ENCODE measurements at regions of chrX and their contacts with region 1.

Region 1: DNA sequence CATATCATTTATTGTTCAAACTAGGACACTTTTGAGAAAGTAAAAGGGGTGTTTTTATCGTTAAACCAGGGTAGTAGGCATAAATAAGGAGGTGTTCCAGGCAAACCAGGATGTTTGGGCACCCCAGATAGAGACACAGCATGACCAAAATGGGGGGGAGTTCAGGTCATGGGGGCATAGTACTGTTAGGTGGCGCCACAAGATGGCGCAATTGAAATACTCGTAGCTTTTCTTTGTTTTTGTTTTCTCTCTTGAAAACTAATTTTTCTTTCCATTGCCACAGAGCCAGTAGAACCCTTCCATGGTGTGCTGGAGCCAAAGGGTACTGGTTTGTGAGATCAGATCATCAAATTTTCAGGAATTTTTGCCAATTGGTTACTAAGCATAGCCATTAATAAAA is 283.4 kb downstream of the BCOR start:
- DNase-seq: peak; percentile 51
- H3K4me3 Mint-ChIP-seq: no peak overlapping the region
- H3K27ac Mint-ChIP-seq: peak overlapping the region; percentile 4
- H3K4me1 Mint-ChIP-seq: peaks cover 15% of the 10 kb centered on the region
- H3K27me3 Mint-ChIP-seq: peaks cover 58% of the 10 kb centered on the region
- CTCF ChIP-seq: peak; percentile 45

Region 2: DNA sequence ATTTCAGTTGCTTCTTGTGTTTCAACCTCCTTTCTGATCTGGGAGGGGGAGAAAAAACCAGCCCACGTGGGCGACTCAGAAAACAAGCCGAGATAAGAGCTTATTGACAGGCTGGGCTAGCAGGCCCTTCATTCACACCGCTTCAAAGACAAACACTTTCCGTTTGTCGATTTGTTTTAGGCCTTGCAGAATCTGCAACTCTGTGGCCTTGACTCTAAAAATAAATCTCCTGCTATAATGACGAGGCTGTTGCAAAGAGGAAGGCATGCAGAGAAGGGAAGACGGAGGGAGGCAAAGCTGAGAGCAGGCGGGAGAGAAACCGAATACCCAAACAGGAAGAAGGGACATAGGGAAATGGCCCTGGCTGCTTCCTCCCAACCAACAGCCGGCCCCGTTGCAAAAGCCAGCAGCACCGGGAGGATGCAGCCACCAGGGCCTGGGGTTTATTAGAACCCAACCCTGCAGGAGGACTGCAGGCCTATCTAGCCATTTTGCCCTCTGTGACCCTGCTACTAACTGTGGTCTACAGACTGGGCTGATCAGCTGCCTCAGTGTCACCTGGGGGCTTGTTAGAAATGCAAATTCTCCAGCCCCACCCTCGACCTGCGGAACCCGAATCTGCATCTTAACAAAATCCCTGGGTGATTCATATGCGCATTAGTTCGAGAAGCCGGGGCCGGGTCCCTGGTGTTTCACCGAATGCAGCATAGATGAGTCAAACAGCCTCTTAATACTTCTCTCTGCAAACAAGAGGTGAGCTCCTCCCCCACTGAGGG is 42.1 kb before region 1 on chrX:
- CTCF ChIA-PET with region 1: no interaction called
- POLR2A ChIA-PET with region 1: no interaction called
- intact Hi-C with region 1: no loop called
- DNase-seq: no peak
- H3K4me3 Mint-ChIP-seq: no peak overlapping the region
- H3K27ac Mint-ChIP-seq: no peak overlapping the region
- H3K4me1 Mint-ChIP-seq: no peaks in the 10 kb centered on the region
- H3K27me3 Mint-ChIP-seq: peaks cover 44% of the 10 kb centered on the region
- CTCF ChIP-seq: no peak

Region 3: GRCh38 chrX:39907964-39908616 is 93.7 kb after region 1 on chrX:
- CTCF ChIA-PET with region 1: interaction called, 3 read pairs
- POLR2A ChIA-PET with region 1: no interaction called
- intact Hi-C with region 1: loop called (anchors 1 kb)
- DNase-seq: peak; percentile 90
- H3K4me3 Mint-ChIP-seq: peak overlapping the region; percentile 60
- H3K27ac Mint-ChIP-seq: peak overlapping the region; percentile 10
- H3K4me1 Mint-ChIP-seq: peaks cover 26% of the 10 kb centered on the region
- H3K27me3 Mint-ChIP-seq: peaks cover 57% of the 10 kb centered on the region
- CTCF ChIP-seq: no peak

Region 4: GRCh38 chrX:40013266-40014195 is 199.1 kb after region 1 on chrX:
- CTCF ChIA-PET with region 1: no interaction called
- POLR2A ChIA-PET with region 1: interaction called, 5 read pairs
- intact Hi-C with region 1: loop called (anchors 1 kb)
- DNase-seq: peak; percentile 74
- H3K4me3 Mint-ChIP-seq: peak overlapping the region; percentile 79
- H3K27ac Mint-ChIP-seq: peak overlapping the region; percentile 82
- H3K4me1 Mint-ChIP-seq: peaks cover 6% of the 10 kb centered on the region
- H3K27me3 Mint-ChIP-seq: no peaks in the 10 kb centered on the region
- CTCF ChIP-seq: no peak

Region 5: DNA sequence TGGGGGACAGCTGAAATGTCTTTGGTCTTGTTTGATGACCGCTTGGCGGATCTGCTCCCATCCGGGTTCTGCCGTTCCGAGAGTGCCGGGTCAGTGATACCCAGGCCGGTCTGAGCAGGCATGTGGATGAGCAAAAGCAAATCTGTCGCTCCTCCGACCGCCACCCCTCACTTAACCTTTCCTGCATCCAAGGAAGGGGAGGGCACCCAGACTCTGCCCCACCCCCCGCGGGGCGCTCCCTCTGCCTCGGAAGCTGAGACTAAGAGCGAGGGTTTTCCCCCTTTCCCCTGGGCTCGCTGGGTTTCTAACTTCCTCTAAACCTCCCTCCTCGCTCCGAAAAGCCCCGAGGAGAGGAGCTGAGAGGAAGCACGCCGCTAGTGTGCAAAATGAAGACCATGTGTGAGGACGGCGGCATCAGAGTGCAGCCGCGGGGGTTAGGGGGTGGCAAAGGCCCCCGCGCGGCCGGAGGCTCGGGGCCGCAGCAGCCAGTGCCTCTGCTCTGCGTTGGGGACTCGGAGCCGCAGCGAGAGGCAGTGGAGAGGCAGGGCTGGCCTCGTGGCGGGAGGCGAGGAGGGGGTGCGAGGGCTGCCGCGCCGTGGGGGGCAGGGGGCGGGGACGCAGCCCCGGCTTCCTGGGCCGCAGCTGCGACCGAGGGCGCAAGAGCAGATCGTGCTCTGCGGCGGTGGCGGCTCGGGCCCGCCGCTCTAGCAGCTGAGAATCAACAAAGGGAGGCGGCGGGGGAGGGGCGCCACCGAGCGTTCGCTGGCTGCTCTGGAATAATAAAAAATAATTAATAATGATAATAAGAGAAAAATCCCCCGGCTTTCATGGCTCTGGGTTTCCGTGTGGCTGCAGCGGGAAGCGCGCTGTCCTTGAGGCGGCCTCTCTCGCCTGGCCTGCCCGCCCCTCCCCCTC is 339.2 kb after region 1 on chrX:
- CTCF ChIA-PET with region 1: no interaction called
- POLR2A ChIA-PET with region 1: no interaction called
- intact Hi-C with region 1: loop called (anchors 1 kb)
- DNase-seq: peak; percentile 49
- H3K4me3 Mint-ChIP-seq: peak overlapping the region; percentile 62
- H3K27ac Mint-ChIP-seq: no peak overlapping the region
- H3K4me1 Mint-ChIP-seq: no peaks in the 10 kb centered on the region
- H3K27me3 Mint-ChIP-seq: no peaks in the 10 kb centered on the region
- CTCF ChIP-seq: no peak

Measured in MCF 10A (cell line).